CD4-positive, alpha-beta memory T cell (primary cell): ENCODE measurements at regions of chr3 and their contacts with region 1.

Region 1: GRCh38 chr3:56775838-56776555 is 25.8 kb downstream of the ARHGEF3 start:
- DNase-seq: no peak
- H3K4me3 ChIP-seq: no peak overlapping the region
- H3K4me3 Mint-ChIP-seq: peak overlapping the region in 5 of 8 donors; percentile 16 to 46 (median 41)
- H3K27ac ChIP-seq: no peak overlapping the region
- H3K27ac Mint-ChIP-seq: peak overlapping the region in 6 of 7 donors; percentile 2 to 85 (median 45)
- H3K4me1 ChIP-seq: peaks cover 75% of the 10 kb centered on the region
- H3K4me1 Mint-ChIP-seq: peaks cover 60 to 97% (median 79%) of the 10 kb centered on the region in 4 donors
- H3K27me3 ChIP-seq: no peaks in the 10 kb centered on the region
- H3K27me3 Mint-ChIP-seq: no peaks in the 10 kb centered on the region

Region 2: DNA sequence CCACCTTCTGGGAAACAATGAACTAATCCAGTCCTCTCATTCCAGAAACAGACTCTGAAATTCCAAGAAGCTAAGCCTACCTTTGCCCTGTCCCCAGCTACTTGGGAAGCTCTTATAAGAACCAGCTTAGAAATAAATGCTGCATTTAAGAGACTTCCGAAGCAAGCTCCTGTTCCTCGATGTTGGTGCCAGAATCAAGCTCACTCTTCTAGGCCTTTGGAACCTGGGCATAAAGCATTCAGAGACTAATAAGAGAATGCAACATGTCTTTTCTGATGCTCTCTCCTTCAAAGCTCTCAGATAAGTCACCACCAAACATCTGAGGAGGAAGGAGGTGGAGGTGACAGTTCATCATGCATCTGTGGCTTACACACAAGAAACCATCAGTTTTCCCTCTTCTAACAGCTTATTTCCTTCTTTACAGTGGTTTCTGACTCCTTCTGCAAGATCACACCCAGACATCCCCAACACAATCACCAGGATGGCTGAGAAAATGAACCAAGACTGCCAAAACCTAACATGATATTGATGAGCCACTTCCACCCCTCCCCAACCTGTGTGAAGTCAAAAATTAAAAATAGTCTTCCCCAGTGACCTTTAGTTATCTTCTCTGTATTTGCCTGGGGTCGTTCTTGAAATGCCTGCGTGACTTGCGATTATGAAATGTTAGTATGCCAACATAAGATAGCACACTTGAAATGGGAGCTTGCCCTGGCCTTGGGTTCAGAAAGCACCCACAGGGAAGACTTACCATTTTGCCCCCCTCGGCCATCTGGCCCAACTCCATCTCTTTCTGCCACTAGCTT is 14.2 kb after region 1 on chr3:
- CTCF ChIA-PET with region 1: interaction called, 3 read pairs
- POLR2A ChIA-PET with region 1: interaction called, 218 read pairs
- intact Hi-C with region 1: loop called (anchors 2 kb)
- DNase-seq: peak; percentile 39 to 63 (median 42)
- H3K4me3 ChIP-seq: peak overlapping the region in 1 of 2 donors; percentile 22
- H3K4me3 Mint-ChIP-seq: peak overlapping the region; percentile 5 to 80 (median 70)
- H3K27ac ChIP-seq: peak overlapping the region; percentile 69
- H3K27ac Mint-ChIP-seq: peak overlapping the region; percentile 82 to 97 (median 86)
- H3K4me1 ChIP-seq: peaks cover 91% of the 10 kb centered on the region
- H3K4me1 Mint-ChIP-seq: peaks cover 72 to 94% (median 79%) of the 10 kb centered on the region in 4 donors
- H3K27me3 ChIP-seq: no peaks in the 10 kb centered on the region
- H3K27me3 Mint-ChIP-seq: no peaks in the 10 kb centered on the region